OCI-LY7 (cell line): ENCODE measurements at regions of chr12 and their contacts with region 1.

Region 1: GRCh38 chr12:91382081-91382543 is 199.5 kb upstream of the DCN start:
- DNase-seq: peak; percentile 77
- H3K4me3 ChIP-seq: no peak overlapping the region
- H3K27ac ChIP-seq: no peak overlapping the region
- H3K4me1 ChIP-seq: no peaks in the 10 kb centered on the region
- CTCF ChIP-seq: peak; percentile 94

Region 2: GRCh38 chr12:91744597-91744996 is 362.5 kb after region 1 on chr12:
- CTCF ChIA-PET with region 1: no interaction called
- POLR2A ChIA-PET with region 1: no interaction called
- intact Hi-C with region 1: no loop called
- DNase-seq: no peak
- H3K4me3 ChIP-seq: no peak overlapping the region
- H3K27ac ChIP-seq: no peak overlapping the region
- H3K4me1 ChIP-seq: no peaks in the 10 kb centered on the region
- CTCF ChIP-seq: no peak

Region 3: GRCh38 chr12:91792597-91792996 is 410.5 kb after region 1 on chr12:
- CTCF ChIA-PET with region 1: no interaction called
- POLR2A ChIA-PET with region 1: no interaction called
- intact Hi-C with region 1: loop called (anchors 10 kb)
- DNase-seq: no peak
- H3K4me3 ChIP-seq: no peak overlapping the region
- H3K27ac ChIP-seq: no peak overlapping the region
- H3K4me1 ChIP-seq: no peaks in the 10 kb centered on the region
- CTCF ChIP-seq: no peak

Region 4: DNA sequence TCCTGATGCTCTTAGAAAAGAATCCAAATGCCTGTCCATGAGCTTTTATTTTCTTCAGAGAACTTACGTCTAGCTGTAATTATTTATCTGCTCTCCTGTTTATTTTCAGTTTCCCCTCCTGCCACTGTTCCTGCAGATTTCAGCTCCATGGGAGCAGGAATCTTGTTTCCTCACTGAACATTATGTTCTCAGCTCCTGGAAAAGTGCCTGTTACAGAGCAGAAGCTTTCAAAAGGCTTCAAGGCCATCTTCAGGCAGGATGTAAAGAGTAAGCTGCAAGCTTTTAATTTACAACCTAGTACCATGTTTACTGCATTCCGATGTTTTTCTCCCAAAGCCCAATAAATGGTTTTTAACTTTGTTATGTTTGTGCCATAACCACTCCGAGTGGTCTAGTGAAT is 861.9 kb after region 1 on chr12:
- CTCF ChIA-PET with region 1: no interaction called
- POLR2A ChIA-PET with region 1: no interaction called
- intact Hi-C with region 1: loop called (anchors 10 kb)
- DNase-seq: no peak
- H3K4me3 ChIP-seq: no peak overlapping the region
- H3K27ac ChIP-seq: no peak overlapping the region
- H3K4me1 ChIP-seq: no peaks in the 10 kb centered on the region
- CTCF ChIP-seq: no peak